H1 (cell line): ENCODE measurements at regions of chr4 and their contacts with region 1.

Region 1: DNA sequence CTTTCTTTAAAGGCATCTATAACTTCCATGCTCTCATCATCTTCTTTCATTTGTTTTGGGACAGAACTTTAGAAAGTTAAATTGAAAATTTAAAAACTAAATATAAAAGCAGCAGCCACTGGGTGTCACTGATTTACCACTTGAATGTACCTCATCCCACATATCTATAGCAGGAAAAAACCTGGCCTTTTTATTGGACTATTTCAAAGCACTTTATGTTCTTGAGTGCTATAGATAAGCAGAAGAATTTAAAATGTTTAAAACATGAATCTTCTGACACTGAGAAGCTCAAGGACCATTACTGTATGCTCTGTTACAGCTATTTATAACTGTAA is 165.3 kb upstream of the TTC29 start:
- DNase-seq: no peak
- H3K4me3 ChIP-seq: no peak overlapping the region
- H3K27ac ChIP-seq: no peak overlapping the region
- H3K4me1 ChIP-seq: no peaks in the 10 kb centered on the region
- H3K27me3 ChIP-seq: no peaks in the 10 kb centered on the region
- CTCF ChIP-seq: no peak
- EP300 ChIP-seq: no peak
- POLR2A ChIP-seq: no peak
- RAD21 ChIP-seq: peak; percentile 43 to 45; a peak in 3 of 4 replicates

Region 2: GRCh38 chr4:146857298-146857697 is 253.7 kb before region 1 on chr4:
- CTCF ChIA-PET with region 1: no interaction called
- POLR2A ChIA-PET with region 1: no interaction called
- DNase-seq: no peak
- H3K4me3 ChIP-seq: no peak overlapping the region
- H3K27ac ChIP-seq: no peak overlapping the region
- H3K4me1 ChIP-seq: no peaks in the 10 kb centered on the region
- H3K27me3 ChIP-seq: no peaks in the 10 kb centered on the region
- CTCF ChIP-seq: no peak
- EP300 ChIP-seq: no peak
- POLR2A ChIP-seq: no peak
- RAD21 ChIP-seq: no peak

Region 3: GRCh38 chr4:147596981-147597380 is 486.0 kb after region 1 on chr4:
- CTCF ChIA-PET with region 1: interaction called, 10 read pairs
- POLR2A ChIA-PET with region 1: no interaction called
- DNase-seq: no peak
- H3K4me3 ChIP-seq: no peak overlapping the region
- H3K27ac ChIP-seq: no peak overlapping the region
- H3K4me1 ChIP-seq: peaks cover 0 to 3% (median 0%) of the 10 kb centered on the region in 4 experiments; a peak in 1 of 7 replicates
- H3K27me3 ChIP-seq: no peaks in the 10 kb centered on the region
- CTCF ChIP-seq: no peak
- EP300 ChIP-seq: no peak
- POLR2A ChIP-seq: no peak
- RAD21 ChIP-seq: no peak